Activated CD4-positive, alpha-beta memory T cell treated with anti-CD3 and anti-CD28 coated beads for 36 hours (primary cell): ENCODE measurements at regions of chr1 and their contacts with region 1.

Region 1: GRCh38 chr1:20696397-20697329 is 21.1 kb downstream of the KIF17 start:
- DNase-seq: peak; percentile 85
- H3K4me3 Mint-ChIP-seq: peak overlapping the region; percentile 77
- H3K27ac Mint-ChIP-seq: no peak overlapping the region
- H3K4me1 Mint-ChIP-seq: peaks cover 6% of the 10 kb centered on the region
- H3K27me3 Mint-ChIP-seq: peaks cover 6% of the 10 kb centered on the region

Region 2: DNA sequence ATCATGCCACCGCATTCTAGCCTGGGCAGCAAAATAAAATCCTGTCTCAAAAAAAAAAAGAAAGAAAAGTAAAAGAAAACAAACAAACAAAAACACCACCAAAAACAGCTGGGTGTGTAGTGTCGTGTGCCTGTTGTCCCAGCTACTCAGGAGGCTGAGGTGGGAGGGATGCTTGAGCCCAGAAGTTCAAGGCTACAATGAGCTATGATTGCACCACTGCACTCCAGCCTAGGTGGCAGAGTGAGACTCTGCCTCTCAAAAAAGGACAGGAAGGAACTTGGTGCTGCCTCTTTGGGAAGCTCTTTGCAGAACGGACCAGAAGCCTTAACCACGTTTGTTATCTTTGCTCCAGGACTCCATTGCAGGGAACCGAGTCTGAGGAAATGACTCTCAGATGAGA is 10.2 kb after region 1 on chr1:
- CTCF ChIA-PET with region 1: interaction called, 19 read pairs
- POLR2A ChIA-PET with region 1: no interaction called
- intact Hi-C with region 1: no loop called
- DNase-seq: no peak
- H3K4me3 Mint-ChIP-seq: no peak overlapping the region
- H3K27ac Mint-ChIP-seq: no peak overlapping the region
- H3K4me1 Mint-ChIP-seq: no peaks in the 10 kb centered on the region
- H3K27me3 Mint-ChIP-seq: no peaks in the 10 kb centered on the region

Region 3: GRCh38 chr1:20732588-20733360 is 36.1 kb after region 1 on chr1 and contains the start of gene SH2D5:
- CTCF ChIA-PET with region 1: interaction called, 21 read pairs
- POLR2A ChIA-PET with region 1: no interaction called
- intact Hi-C with region 1: loop called (anchors 2 kb)
- DNase-seq: peak; percentile 85
- H3K4me3 Mint-ChIP-seq: peak within 1 kb of the TSS; percentile 74
- H3K27ac Mint-ChIP-seq: no peak within 1 kb of the TSS
- H3K4me1 Mint-ChIP-seq: peaks cover 21% of the 10 kb centered on the region
- H3K27me3 Mint-ChIP-seq: peaks cover 19% of the 10 kb centered on the region
- total RNA-seq, gene SH2D5: 0.07 to 0.12 TPM

Region 4: DNA sequence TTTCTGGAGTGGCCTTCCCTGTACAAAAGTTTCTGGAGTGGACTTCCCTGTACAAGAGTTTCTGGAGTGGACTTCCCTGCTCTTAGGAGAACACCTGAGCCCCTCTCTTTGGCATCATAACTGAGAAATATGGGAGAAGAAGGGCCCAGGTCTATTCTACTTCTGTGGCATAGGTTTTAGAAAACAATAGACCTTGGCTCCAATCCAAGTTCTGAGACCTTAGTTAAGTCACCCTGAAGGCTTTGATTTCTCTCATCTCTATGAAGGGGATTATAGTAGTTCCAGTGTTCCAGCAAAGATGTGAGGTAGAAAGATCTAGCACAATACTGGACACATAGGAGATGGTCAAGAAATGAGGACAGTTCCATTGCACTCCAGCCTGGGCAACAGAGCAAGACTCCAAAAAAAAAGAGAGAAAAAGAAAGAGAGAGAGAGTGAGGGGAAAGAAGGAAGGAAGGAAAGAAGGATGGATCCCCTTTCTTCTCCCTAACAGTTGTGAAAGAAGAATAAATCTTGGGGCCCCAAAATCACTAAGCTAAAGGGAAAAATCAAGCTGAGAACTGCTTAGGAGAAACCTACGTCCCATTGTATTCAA is 493.3 kb after region 1 on chr1:
- CTCF ChIA-PET with region 1: interaction called, 129 read pairs
- POLR2A ChIA-PET with region 1: no interaction called
- intact Hi-C with region 1: loop called (anchors 1 kb)
- DNase-seq: no peak
- H3K4me3 Mint-ChIP-seq: no peak overlapping the region
- H3K27ac Mint-ChIP-seq: no peak overlapping the region
- H3K4me1 Mint-ChIP-seq: no peaks in the 10 kb centered on the region
- H3K27me3 Mint-ChIP-seq: peaks cover 5% of the 10 kb centered on the region